Gastrocnemius medialis (tissue), 4 donors: ENCODE measurements at regions of chr17 and their contacts with region 1.

Region 1: GRCh38 chr17:81860756-81861518 is 602 bp upstream of the P4HB start:
- DNase-seq: peak; percentile 100
- ATAC-seq: peak; percentile 85 to 88
- H3K4me3 ChIP-seq: peak overlapping the region; percentile 85 to 90 (median 88)
- H3K27ac ChIP-seq: peak overlapping the region; percentile 99 to 100 (median 99)
- H3K4me1 ChIP-seq: peaks cover 53 to 61% of the 10 kb centered on the region in 2 donors
- H3K27me3 ChIP-seq: no peaks in the 10 kb centered on the region
- CTCF ChIP-seq: peak in 3 of 5 experiments; percentile 7 to 63 (median 55)
- POLR2A ChIP-seq: peak; percentile 97 to 99

Region 2: DNA sequence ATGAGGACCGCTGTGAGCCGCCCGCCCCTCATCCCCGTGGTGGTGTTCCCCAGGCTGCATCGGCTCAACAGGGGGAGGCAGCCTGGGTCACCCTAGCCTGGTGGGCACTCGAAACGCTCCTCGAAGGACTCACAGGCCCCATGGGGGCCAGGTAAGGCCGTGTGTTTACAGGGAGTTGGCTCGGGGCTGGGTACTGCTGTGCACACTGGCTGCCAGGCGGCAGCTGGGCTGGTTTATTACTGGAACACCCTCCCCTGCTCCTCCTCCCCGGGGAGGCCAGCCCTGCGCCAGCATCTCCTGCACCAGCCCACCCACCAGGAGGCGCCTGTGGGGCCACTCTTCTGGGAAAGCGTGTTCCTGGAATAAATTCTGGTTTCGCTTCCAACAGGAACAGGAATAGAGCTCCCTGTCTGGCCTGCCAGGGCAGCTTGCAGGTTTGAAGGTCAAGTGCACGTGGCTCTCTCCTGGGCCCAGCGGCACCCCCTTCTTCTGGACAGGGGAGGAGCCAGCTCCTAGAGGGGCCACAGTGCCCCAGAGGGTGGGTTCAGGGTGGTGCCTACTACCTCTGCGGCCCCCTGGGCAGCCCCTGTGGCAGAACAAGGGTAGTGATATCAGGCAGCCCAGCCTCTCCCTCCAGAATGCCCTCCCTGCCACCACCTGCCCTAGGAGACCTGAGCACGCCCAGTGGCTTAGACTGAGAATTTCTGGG is 39.2 kb before region 1 on chr17:
- in situ Hi-C with region 1: loop called in 1 of 4 experiments (anchors 5 kb)
- intact Hi-C with region 1: loop called (anchors 2 kb)
- DNase-seq: peak; percentile 77 to 94
- ATAC-seq: peak; percentile 87 to 92
- H3K4me3 ChIP-seq: peak overlapping the region in 1 of 4 donors; percentile 4
- H3K27ac ChIP-seq: peak overlapping the region; percentile 86 to 94 (median 90)
- H3K4me1 ChIP-seq: peaks cover 17 to 21% of the 10 kb centered on the region in 2 donors
- H3K27me3 ChIP-seq: no peaks in the 10 kb centered on the region
- CTCF ChIP-seq: peak; percentile 78 to 88 (median 82)
- POLR2A ChIP-seq: peak in 1 of 2 donors; percentile 19

Region 3: DNA sequence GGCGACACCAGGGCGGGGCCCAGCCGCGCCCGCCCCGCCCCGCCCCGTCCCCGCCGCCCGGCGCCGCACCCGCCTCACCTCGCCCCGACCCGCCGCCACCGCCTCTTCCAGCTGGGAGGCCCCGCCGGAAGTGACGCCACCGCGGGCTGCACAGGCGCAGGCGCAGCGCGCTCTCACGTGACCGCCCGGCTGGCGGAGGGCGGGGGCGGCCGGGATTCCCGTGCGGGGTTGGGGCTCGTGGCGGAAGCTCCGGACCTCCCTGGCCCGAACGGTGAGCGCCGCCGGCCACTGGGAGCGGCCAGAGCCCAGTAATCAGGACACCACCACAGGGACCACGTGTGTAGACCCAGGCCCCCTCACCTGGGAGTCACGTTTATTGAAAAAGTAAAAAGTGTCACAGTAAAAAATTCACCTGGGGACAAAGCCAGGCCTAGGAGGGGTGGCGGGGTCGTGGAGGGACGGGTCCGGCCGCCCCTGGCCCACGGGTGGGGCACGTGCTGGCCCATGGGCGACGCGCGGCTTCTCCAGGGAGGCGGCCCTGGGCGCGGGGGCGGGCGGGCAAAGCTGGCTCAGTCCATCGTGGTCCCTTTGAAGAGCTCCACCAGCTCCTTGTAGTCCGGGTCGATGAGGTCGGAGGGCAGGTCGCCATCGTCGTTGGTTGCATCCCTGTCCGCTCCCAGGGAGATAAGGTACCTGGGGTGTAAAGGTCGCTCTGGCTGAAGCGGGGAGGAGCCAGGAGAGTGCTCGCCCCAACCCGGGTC is 27.6 kb before region 1 on chr17 and contains the start of gene MCRIP1:
- in situ Hi-C with region 1: no loop called
- intact Hi-C with region 1: loop called (anchors 1 kb)
- DNase-seq: peak; percentile 91 to 93
- ATAC-seq: peak; percentile 27 to 38
- H3K4me3 ChIP-seq: peak within 1 kb of the TSS; percentile 79 to 95 (median 84)
- H3K27ac ChIP-seq: peak within 1 kb of the TSS; percentile 99 to 100 (median 99)
- H3K4me1 ChIP-seq: peaks cover 31 to 36% of the 10 kb centered on the region in 2 donors
- H3K27me3 ChIP-seq: no peaks in the 10 kb centered on the region
- CTCF ChIP-seq: peak in 1 of 5 experiments; percentile 7
- POLR2A ChIP-seq: peak; percentile 94 to 96
- total RNA-seq, gene MCRIP1: 8.3 to 36.2 (median 25.2) TPM

Region 4: GRCh38 chr17:81840826-81841778 is 19.8 kb before region 1 on chr17:
- in situ Hi-C with region 1: no loop called
- intact Hi-C with region 1: loop called (anchors 1 kb)
- DNase-seq: peak; percentile 88 to 93
- ATAC-seq: peak; percentile 70
- H3K4me3 ChIP-seq: peak overlapping the region; percentile 25 to 50 (median 38)
- H3K27ac ChIP-seq: peak overlapping the region; percentile 98 to 99 (median 99)
- H3K4me1 ChIP-seq: peaks cover 64 to 67% of the 10 kb centered on the region in 2 donors
- H3K27me3 ChIP-seq: no peaks in the 10 kb centered on the region
- CTCF ChIP-seq: no peak
- POLR2A ChIP-seq: peak; percentile 75 to 86

Region 5: DNA sequence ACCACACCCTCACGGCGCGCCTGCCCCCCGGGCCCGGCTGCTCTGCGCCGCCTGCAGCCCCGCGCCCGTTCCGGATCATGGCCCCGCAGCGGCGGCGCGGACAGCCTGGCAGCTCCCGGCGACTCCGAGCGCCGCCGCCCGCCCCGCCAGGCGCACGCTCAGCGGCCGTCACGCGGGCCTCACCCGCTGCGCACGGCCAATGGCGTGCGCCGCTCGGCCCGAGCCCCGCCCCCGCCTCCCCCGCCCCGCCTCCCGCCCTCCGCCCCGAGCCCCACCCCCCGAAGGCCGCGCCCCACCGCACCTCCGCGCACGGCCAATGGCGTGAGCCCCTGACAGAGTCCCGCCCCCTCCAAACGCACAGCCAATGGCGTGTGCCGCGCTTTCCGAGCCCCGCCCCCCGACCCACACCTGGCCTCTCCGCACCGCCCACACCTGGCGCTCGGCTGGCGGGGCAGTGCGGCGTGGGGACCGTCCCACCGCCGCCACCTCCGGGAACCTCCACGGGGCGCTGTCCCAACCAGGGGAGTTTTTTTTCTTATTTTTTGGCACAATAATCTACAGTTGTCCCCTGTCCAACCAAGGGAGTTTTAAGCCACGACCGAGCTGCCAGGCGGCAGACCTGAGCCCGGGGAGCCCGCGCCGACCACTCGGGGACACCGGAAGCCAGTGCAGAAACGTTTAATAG is 50.5 kb after region 1 on chr17 and contains the start of gene PCYT2:
- in situ Hi-C with region 1: no loop called
- intact Hi-C with region 1: loop called (anchors 2 kb)
- DNase-seq: peak; percentile 87 to 90
- ATAC-seq: peak; percentile 78 to 81
- H3K4me3 ChIP-seq: peak within 1 kb of the TSS; percentile 61 to 78 (median 63)
- H3K27ac ChIP-seq: peak within 1 kb of the TSS; percentile 72 to 81 (median 77)
- H3K4me1 ChIP-seq: peaks cover 21 to 27% of the 10 kb centered on the region in 2 donors
- H3K27me3 ChIP-seq: no peaks in the 10 kb centered on the region
- CTCF ChIP-seq: peak in 2 of 5 experiments; percentile 10 to 21
- POLR2A ChIP-seq: peak; percentile 77 to 86
- total RNA-seq, gene PCYT2: 22.6 to 44.8 (median 37.1) TPM

Region 6: GRCh38 chr17:81927653-81928543 is 67.0 kb after region 1 on chr17 and contains the start of gene MAFG:
- in situ Hi-C with region 1: no loop called
- intact Hi-C with region 1: no loop called
- DNase-seq: peak; percentile 82 to 86
- ATAC-seq: peak; percentile 55 to 59
- H3K4me3 ChIP-seq: peak within 1 kb of the TSS; percentile 68 to 89 (median 77)
- H3K27ac ChIP-seq: peak within 1 kb of the TSS; percentile 90 to 98 (median 93)
- H3K4me1 ChIP-seq: peaks cover 38 to 40% of the 10 kb centered on the region in 2 donors
- H3K27me3 ChIP-seq: peaks cover 0 to 3% (median 0%) of the 10 kb centered on the region in 3 donors
- CTCF ChIP-seq: peak in 4 of 5 experiments; percentile 1 to 20 (median 19)
- POLR2A ChIP-seq: peak; percentile 92 to 95
- total RNA-seq, gene MAFG: 37.1 to 65.5 (median 51.9) TPM

Region 7: GRCh38 chr17:82003411-82004381 is 142.8 kb after region 1 on chr17:
- in situ Hi-C with region 1: no loop called
- intact Hi-C with region 1: no loop called
- DNase-seq: peak; percentile 48 to 71
- ATAC-seq: peak; percentile 71 to 72
- H3K4me3 ChIP-seq: peak overlapping the region in 1 of 4 donors; percentile 13
- H3K27ac ChIP-seq: peak overlapping the region; percentile 7 to 58 (median 44)
- H3K4me1 ChIP-seq: peaks cover 35 to 63% of the 10 kb centered on the region in 2 donors
- H3K27me3 ChIP-seq: no peaks in the 10 kb centered on the region
- CTCF ChIP-seq: no peak
- POLR2A ChIP-seq: no peak

Region 8: DNA sequence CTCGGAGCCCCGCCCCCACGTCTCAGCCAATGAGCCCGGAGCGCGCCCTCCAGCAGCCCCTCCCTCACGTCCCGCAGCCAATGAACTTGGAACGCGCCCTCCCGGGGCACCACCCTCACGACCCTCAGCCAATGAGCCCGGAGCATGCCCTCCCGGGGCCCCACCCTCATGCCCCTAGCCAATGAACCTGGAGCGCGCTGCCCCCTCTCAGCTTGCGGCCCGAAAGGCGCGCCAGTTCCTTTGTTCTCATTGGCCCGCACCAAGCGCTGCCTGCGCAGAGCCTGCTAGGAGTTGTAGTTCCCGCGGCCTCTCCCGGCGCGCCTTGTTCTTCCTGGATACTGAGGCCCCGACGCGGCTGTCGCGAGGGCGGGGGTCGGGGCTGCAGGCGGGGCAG is 162.0 kb after region 1 on chr17 and contains the start of gene LRRC45:
- in situ Hi-C with region 1: no loop called
- intact Hi-C with region 1: loop called (anchors 1 kb)
- DNase-seq: peak; percentile 100
- ATAC-seq: peak; percentile 86 to 91
- H3K4me3 ChIP-seq: peak within 1 kb of the TSS; percentile 89 to 92 (median 92)
- H3K27ac ChIP-seq: peak within 1 kb of the TSS; percentile 78 to 86 (median 79)
- H3K4me1 ChIP-seq: peaks cover 25 to 55% of the 10 kb centered on the region in 2 donors
- H3K27me3 ChIP-seq: no peaks in the 10 kb centered on the region
- CTCF ChIP-seq: no peak
- POLR2A ChIP-seq: no peak
- total RNA-seq, gene LRRC45: 1.1 to 5.0 (median 3.8) TPM

Region 9: DNA sequence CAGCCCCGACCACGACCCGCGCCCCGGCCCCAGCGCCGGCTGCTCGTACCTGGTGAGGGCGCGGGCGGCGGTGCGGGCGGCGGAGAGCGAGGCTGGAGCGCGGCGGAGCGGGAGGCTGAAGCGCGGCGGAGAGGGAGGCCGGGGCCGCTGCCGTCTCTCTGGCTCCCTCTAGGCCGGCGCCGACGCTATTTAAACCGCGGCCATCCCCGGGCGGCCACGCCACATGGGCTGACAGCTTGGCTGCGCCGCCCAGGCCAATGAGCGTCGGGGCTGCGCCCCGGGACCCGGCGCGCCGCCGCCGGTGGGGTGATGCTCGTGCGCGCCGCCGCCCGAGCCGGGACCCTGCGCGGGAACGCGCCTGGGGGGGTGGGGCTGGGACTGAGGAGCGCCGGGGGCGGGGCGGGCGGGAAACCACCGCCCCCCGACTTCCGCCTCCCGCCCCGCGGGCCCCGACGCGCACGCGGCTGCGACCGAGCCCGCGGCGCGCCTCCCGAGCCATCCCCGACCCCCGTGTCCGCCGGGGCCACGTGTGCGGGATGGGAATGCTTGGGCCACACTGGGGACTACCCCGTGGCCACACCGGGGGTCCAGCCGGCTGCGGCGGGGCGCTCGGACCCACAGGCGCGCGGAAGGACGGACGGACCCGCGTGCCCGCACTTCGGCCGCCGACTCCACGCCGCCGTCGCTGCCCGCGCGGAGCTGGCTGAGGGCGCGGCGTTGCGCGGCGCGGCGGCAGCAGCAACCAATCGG is 237.3 kb after region 1 on chr17 and contains the start of gene FASN:
- in situ Hi-C with region 1: no loop called
- intact Hi-C with region 1: loop called (anchors 2 kb)
- DNase-seq: peak; percentile 75 to 90
- ATAC-seq: peak; percentile 68 to 71
- H3K4me3 ChIP-seq: peak within 1 kb of the TSS; percentile 61 to 93 (median 72)
- H3K27ac ChIP-seq: peak within 1 kb of the TSS; percentile 81 to 96 (median 90)
- H3K4me1 ChIP-seq: peaks cover 30 to 32% of the 10 kb centered on the region in 2 donors
- H3K27me3 ChIP-seq: no peaks in the 10 kb centered on the region
- CTCF ChIP-seq: peak in 4 of 5 experiments; percentile 28 to 43 (median 36)
- POLR2A ChIP-seq: peak; percentile 82 to 97
- total RNA-seq, gene FASN: 16.3 to 34.5 (median 26.3) TPM